ENCODE measurements at regions of chr11 and their contacts with region 1.

Region 1: DNA sequence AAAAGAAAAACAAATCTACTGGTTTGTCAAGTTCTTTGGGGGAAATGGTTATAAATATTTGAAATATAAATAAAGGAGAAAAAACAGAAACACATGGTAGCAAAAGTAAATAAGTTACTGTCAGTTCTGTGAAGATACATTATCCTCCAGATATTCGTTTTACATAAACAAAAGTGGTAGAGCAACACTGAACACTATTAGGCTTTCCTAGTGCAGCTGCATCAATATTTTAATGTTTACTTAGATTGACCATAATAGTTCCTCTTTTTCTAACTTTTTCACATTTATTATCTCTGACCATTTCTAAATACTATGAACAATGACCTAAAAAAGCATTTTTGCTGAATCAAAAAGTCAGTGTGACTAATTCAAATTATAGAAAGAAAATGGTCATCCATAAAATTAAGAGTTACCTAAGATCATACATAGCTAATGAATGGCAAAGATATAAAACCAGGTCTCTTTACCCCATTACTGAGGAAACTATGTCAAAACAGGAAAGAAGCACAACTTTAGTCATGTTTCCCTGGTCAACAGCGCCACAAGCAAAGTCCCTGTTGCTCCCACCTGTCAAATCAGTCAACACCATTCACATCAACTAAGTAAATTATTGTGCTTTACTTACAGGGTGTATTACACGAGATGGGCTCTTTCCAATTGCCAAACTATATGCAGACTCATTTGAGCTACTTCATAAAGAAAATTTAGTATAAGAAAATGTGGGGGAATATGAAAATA is 38.5 kb downstream of the SBF2 start:
- DNase-seq: no peak
- ATAC-seq: no peak
- H3K4me3 ChIP-seq: no peak overlapping the region
- H3K27ac ChIP-seq: no peak overlapping the region
- H3K4me1 ChIP-seq: peaks cover 4% of the 10 kb centered on the region; the same call in 1 of the 2 replicates
- H3K27me3 ChIP-seq: no peaks in the 10 kb centered on the region
- CTCF ChIP-seq: no peak

Region 2: DNA sequence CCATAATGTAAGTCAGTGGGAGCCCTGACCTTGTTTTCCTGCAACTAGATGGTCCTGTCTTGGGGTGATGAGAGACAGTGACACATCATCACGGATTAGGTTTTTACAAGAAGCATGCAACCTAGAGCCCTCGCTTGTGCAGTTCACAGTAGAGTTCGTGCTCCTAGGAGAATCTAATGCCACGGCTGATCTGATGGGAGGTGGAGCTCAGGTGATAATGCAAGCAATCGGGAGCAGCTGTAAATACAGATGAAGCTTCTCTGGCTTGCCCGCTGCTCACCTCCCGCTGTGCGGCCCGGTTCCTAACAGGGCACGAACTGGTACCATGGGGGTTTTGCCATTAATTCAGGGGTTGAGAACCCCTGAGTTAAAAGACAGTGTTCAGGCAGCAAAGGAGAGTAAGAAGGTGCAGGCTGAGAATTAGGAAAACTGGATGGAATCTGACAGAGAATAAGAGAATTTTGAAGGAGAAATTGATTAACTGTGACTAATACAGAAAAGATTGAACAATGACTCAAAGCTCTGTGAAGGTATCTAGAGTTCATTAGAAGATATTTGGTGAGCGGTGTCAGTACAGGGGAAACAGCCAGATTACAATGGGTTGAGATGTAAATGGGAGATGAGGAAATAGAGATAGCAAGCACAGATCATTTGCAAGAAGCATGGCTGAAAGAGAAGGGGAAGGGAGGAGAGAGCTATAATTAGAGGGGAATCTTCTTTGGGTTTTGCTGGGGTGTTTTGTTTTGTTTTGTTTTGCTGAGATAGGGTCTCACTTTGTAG is 661.1 kb before region 1 on chr11:
- CTCF ChIA-PET with region 1: no interaction called
- POLR2A ChIA-PET with region 1: no interaction called
- in situ Hi-C with region 1: no loop called
- intact Hi-C with region 1: no loop called
- DNase-seq: no peak
- ATAC-seq: no peak; the same call in 1 of the 2 replicates
- H3K4me3 ChIP-seq: no peak overlapping the region
- H3K27ac ChIP-seq: no peak overlapping the region
- H3K4me1 ChIP-seq: peaks cover 6% of the 10 kb centered on the region; the same call in 1 of the 2 replicates
- H3K27me3 ChIP-seq: no peaks in the 10 kb centered on the region
- CTCF ChIP-seq: no peak

Region 3: DNA sequence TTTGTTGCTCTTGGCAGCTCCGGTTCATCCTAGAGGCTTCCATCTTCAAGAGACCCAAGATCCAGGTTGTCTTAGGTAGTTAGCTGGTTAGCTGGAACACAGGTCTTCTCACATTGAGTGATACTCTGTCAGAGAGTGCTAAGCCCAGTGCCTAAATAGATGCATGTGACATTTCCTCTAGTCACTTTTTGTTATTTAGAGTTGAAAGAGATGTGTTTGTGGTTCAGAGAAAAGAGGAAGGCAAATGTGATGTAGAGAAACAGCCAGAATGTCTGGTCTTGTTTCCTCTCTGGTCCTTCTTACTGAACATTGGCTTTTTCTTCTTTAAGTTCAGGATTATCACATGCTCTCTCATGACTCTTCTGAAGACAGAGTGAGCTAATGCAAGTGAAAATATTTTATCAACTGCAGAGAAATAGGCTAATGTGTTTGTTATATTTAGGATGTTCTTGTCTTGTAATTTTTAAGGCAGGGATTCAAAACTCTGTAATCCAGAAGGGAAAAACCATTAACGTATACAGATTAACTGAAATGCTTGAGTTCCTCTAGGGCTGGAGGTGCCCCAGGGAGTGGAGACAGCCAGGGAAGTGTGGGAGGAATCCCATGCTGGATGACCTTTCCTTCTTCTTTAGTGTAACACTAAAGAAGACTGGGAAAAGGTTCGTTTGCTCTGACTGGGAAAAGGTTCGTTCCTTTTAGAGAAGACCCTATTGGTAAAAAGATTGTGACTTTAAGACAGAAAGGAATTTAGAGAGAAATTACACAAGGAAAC is 516.2 kb before region 1 on chr11:
- CTCF ChIA-PET with region 1: interaction called, 10 read pairs
- POLR2A ChIA-PET with region 1: no interaction called
- in situ Hi-C with region 1: no loop called
- intact Hi-C with region 1: no loop called
- DNase-seq: no peak
- ATAC-seq: no peak
- H3K4me3 ChIP-seq: no peak overlapping the region
- H3K27ac ChIP-seq: no peak overlapping the region
- H3K4me1 ChIP-seq: peaks cover 21% of the 10 kb centered on the region
- H3K27me3 ChIP-seq: no peaks in the 10 kb centered on the region
- CTCF ChIP-seq: no peak

Region 4: DNA sequence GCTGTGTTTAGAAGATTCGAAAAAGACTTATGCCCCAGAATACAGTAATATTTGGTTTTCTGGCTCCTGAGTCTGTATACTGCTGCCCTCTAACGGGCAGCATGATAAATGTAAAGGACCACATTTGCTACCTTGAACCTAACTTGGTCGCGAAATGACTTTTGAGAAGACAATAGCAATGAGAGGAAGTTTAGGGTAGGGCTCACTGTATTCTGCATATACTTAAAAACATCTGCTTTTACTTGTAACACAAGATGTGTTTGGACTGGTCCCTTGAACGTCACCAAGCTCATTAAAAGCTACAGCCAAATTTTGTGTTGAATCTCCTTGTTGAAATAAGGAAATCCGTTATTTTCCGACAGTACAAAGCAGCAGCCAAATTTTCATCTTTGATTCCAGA is 282.6 kb before region 1 on chr11:
- CTCF ChIA-PET with region 1: interaction called, 11 read pairs
- POLR2A ChIA-PET with region 1: no interaction called
- in situ Hi-C with region 1: no loop called
- intact Hi-C with region 1: no loop called
- DNase-seq: peak; percentile 53
- ATAC-seq: peak; percentile 72
- H3K4me3 ChIP-seq: no peak overlapping the region
- H3K27ac ChIP-seq: peak overlapping the region; percentile 76
- H3K4me1 ChIP-seq: 0 out of 2 replicates have a peak, but pooled peaks cover 3% of the 10 kb centered on the region
- H3K27me3 ChIP-seq: no peaks in the 10 kb centered on the region
- CTCF ChIP-seq: peak; percentile 85; the same call in 1 of the 2 replicates

Region 5: GRCh38 chr11:10181811-10182210 is 73.7 kb before region 1 on chr11:
- CTCF ChIA-PET with region 1: no interaction called
- POLR2A ChIA-PET with region 1: interaction called, 13 read pairs
- in situ Hi-C with region 1: no loop called
- intact Hi-C with region 1: no loop called
- DNase-seq: peak; percentile 17
- ATAC-seq: no peak; the same call in 1 of the 2 replicates
- H3K4me3 ChIP-seq: no peak overlapping the region
- H3K27ac ChIP-seq: no peak overlapping the region
- H3K4me1 ChIP-seq: no peaks in the 10 kb centered on the region
- H3K27me3 ChIP-seq: no peaks in the 10 kb centered on the region
- CTCF ChIP-seq: peak; percentile 53; the same call in 1 of the 2 replicates

Region 6: DNA sequence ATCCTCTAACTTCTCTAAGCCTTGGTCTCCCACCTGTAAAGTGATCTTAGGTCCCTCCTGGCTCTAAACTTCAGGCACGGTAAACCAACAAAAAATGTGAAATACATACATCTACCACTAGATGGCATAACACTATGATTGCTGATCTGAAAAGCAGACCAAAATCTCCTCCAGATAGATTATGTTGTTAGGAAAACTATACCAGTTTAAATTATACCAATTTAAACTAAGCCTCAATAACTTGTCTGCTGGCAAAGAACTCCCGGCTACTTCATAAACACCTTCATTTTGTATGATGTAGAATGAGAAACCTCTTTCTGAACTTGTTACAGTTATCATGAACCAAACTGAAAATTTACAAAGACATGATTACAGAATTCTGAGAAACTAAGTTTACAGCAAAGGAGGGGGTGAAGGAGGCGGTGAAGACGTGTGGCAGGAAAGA is 47.4 kb before region 1 on chr11:
- CTCF ChIA-PET with region 1: interaction called, 3 read pairs
- POLR2A ChIA-PET with region 1: interaction called, 12 read pairs
- in situ Hi-C with region 1: no loop called
- intact Hi-C with region 1: no loop called
- DNase-seq: peak; percentile 67
- ATAC-seq: peak; percentile 91
- H3K4me3 ChIP-seq: no peak overlapping the region
- H3K27ac ChIP-seq: peak overlapping the region; percentile 77
- H3K4me1 ChIP-seq: peaks cover 28% of the 10 kb centered on the region
- H3K27me3 ChIP-seq: no peaks in the 10 kb centered on the region
- CTCF ChIP-seq: peak; percentile 86; the same call in 1 of the 2 replicates